PC-9 (cell line): ENCODE measurements at regions of chr19 and their contacts with region 1.

Region 1: DNA sequence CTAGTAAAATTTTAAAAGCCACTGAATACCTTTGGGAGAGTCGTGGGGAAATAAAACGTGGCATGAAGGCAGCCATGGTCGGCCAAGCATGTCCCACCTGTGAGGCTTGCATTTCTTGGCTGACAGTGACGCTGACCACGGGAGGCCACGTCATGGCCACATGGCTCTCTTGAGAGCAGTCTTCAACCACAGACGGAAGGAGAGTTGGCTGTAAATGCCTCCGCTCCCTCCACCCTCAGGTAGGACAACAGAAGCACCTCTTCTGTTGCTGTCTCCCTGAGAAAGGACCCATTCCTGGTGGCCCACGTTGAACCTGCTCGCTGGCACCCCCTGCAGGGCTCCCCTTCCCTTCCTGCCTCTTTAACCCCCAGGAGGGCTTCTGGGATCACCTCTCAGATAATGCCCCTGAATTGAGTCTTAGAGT is 10.6 kb upstream of the LRRC25 start:
- DNase-seq: peak in 1 of 2 experiments; percentile 50
- H3K4me3 ChIP-seq: no peak overlapping the region
- H3K27ac ChIP-seq: no peak overlapping the region
- H3K4me1 ChIP-seq: peaks cover 9% of the 10 kb centered on the region
- H3K27me3 ChIP-seq: no peaks in the 10 kb centered on the region
- CTCF ChIP-seq: peak; percentile 63

Region 2: DNA sequence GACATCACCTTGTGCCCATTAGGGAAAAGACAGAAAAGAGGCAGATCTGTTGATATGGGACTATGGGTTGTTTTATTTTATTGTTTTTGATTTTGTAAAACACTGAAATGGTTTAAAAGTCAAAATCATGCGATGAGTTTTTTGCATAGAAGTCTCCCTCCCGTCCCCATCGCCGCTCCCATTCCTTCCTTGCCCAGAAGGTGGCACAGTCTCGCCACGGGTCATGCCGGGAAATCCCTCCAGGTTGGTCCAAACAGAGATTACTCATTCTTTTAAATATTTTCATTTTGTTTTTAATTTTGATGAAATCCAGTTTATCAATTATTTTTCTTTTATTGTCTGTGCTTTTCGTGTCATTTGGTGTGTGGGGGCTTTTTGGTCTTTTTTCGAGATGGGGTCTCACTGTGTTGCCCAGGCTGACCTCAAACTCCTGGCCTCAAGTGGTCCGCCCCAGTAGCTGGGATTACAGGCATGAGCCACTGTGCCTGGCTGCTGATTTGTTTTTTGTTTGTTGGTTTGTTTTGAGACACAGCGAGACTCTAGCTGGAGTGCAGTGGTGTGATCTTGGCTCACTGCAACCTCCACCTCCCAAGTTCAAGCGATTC is 58.4 kb before region 1 on chr19:
- CTCF ChIA-PET with region 1: interaction called, 3 read pairs
- POLR2A ChIA-PET with region 1: no interaction called
- intact Hi-C with region 1: loop called (anchors 1 kb)
- DNase-seq: peak; percentile 63
- H3K4me3 ChIP-seq: no peak overlapping the region
- H3K27ac ChIP-seq: no peak overlapping the region
- H3K4me1 ChIP-seq: peaks cover 10% of the 10 kb centered on the region; the same call in 1 of the 2 replicates
- H3K27me3 ChIP-seq: no peaks in the 10 kb centered on the region
- CTCF ChIP-seq: peak; percentile 93

Region 3: GRCh38 chr19:18557474-18558201 is 149.6 kb after region 1 on chr19 and contains the start of gene KXD1:
- CTCF ChIA-PET with region 1: no interaction called
- POLR2A ChIA-PET with region 1: no interaction called
- intact Hi-C with region 1: no loop called
- DNase-seq: peak; percentile 93 to 94
- H3K4me3 ChIP-seq: peak within 1 kb of the TSS; percentile 95
- H3K27ac ChIP-seq: peak within 1 kb of the TSS; percentile 78
- H3K4me1 ChIP-seq: 0 out of 2 replicates have a peak, but pooled peaks cover 10% of the 10 kb centered on the region
- H3K27me3 ChIP-seq: no peaks in the 10 kb centered on the region
- CTCF ChIP-seq: 0 out of 2 replicates have a peak, but pooled peaks have one; percentile 17
- total RNA-seq, gene KXD1: 97.0 and 101 TPM in 2 replicates